A673 (cell line): ENCODE measurements at regions of chr9 and their contacts with region 1.

Region 1: DNA sequence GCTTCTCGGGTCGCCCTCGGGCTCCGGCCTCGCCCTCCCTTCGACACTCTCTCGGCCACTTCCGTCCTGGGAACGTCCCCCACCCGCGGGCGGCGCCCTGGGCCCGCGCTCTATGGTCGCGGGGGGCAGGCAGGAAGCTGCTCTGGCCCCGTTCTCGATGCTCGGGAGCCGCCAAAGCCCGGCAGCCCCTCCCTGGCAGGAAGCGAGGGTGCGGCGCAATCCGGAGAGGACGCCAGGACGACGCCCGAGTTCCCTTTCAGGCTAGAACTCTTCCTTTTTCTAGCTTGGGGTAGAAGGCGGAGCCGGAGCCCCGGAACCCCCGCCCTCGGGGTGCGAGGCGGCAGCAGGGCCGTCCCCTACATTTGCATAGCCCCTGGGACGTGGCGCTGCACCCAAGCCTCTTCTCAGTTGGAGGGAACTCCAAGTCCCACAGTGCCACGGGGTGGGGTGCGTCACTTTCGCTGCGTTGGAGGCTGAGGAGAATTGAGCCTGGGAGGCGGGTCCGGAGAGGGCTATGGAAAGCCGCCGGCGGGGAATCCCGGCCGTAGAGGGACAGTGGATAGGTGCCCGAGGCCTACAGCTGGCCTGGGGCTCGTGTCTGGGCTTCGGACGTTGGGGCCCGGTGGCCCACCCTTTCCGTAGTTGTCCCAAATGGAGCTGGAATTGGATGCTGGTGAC is at the starts of genes CREB3 and TLN1:
- DNase-seq: peak; percentile 99
- H3K4me3 ChIP-seq: peak within 1 kb of the TSS; percentile 90
- H3K27ac ChIP-seq: peak within 1 kb of the TSS; percentile 87
- H3K4me1 ChIP-seq: peaks cover 21% of the 10 kb centered on the region
- H3K27me3 ChIP-seq: no peaks in the 10 kb centered on the region
- CTCF ChIP-seq: peak; percentile 47
- total RNA-seq, gene CREB3: 27.6 and 29.1 TPM in 2 replicates
- total RNA-seq, gene TLN1: 173 and 178 TPM in 2 replicates

Region 2: DNA sequence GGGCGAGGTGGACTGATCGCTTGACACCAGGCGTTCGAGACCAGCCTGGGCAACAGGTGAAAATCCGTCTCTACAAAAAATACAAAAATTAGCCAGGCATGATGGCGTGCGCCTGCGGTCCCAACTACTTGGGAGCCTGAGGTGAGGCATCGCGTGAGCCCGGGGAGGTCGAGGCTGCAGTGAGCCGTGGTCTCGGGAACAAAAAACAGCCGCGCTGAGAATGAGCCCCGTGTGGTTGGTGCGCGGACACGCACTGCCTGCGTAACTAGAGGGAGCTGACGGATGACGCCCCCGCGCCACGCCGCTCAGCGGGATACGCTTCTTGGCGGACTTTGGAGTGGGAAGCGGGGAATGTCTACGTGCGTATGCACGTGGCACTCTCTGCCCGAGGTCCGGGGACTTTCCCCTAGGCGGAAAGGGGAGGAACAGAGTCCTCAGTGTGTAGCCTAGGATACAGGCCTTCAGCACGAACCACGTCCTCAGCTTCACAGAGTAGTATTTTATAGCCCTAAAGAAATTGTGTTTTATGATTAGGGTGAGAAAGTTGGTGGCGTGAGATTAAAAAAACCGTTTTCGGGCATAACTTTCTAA is 74.6 kb before region 1 on chr9 and contains the start of gene RMRP:
- CTCF ChIA-PET with region 1: no interaction called
- POLR2A ChIA-PET with region 1: no interaction called
- intact Hi-C with region 1: loop called (anchors 5 kb)
- DNase-seq: peak; percentile 100
- H3K4me3 ChIP-seq: peak within 1 kb of the TSS; percentile 74
- H3K27ac ChIP-seq: peak within 1 kb of the TSS; percentile 97
- H3K4me1 ChIP-seq: peaks cover 11% of the 10 kb centered on the region
- H3K27me3 ChIP-seq: no peaks in the 10 kb centered on the region
- CTCF ChIP-seq: peak; percentile 30; the same call in 1 of the 2 replicates
- total RNA-seq, gene RMRP: 13,531 and 14,573 TPM in 2 replicates

Region 3: GRCh38 chr9:35774907-35775635 is 42.8 kb after region 1 on chr9:
- CTCF ChIA-PET with region 1: interaction called, 6 read pairs
- POLR2A ChIA-PET with region 1: no interaction called
- intact Hi-C with region 1: loop called (anchors 5 kb)
- DNase-seq: no peak
- H3K4me3 ChIP-seq: no peak overlapping the region
- H3K27ac ChIP-seq: no peak overlapping the region
- H3K4me1 ChIP-seq: peaks cover 10% of the 10 kb centered on the region
- H3K27me3 ChIP-seq: no peaks in the 10 kb centered on the region
- CTCF ChIP-seq: no peak